ENCODE measurements at regions of chr12 and their contacts with region 1.

Region 1: DNA sequence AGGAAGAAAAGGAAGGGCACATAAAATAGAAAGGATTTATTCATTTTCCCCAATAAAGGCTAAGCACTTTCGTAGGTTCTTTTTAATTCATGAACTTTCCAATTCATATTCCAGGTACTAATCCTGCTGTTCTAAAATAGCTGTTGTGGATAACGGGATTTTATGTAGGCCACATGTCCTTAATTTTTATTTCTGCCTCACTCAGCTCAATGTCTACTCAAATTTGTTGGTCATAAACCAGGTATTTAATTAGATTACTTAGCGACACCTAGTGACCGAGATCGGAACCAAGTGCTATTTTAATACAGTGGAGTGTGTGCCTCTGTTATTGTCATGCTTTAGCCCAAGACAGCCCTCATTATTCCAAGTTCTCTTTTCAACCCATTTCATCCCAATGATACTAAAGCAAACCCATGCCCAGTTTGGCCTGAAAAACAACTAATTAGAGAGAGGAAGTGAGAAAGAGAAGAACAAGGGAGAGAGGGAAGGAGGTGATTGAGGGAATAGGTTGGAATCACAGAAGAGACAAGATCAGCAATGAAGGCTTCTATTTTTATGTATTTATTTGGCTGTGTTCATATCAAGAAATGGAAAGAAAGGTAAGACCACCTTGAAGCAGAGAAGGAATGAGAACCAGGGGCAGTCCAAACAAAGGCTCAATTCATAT is 45.9 kb upstream of the IFNG-AS1 start:
- DNase-seq: peak; percentile 81
- H3K4me3 ChIP-seq: no peak overlapping the region
- H3K27ac ChIP-seq: no peak overlapping the region
- H3K4me1 ChIP-seq: peaks cover 16% of the 10 kb centered on the region
- H3K27me3 ChIP-seq: no peaks in the 10 kb centered on the region

Region 2: DNA sequence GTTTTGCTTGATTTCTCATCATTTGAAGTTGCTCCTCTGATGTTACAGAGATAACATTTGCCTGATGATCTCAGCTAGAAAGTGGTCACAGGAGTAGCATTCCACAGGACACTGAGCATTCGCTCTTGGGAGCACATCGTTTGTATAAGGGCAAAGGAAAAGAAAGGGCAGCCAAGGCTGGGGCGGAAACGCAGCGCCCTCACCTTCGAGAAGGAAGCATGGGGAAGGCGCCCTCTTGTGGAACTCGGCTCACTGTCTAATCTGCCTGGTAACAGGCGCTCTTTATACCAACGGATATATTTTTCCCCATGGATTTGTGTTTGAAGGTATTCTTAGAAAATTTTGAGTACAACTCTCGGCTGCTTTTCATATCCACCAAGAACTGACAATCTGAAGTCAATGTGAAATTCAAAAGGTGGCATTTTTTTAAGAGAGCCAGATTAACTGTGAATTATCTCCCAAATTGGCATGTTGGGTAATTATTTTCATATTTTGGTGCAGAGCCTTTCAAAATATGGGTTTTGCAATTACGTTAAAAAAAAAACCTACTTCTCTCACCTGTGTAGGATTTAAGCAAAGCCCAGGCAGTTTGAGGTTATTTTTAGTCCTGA is 501.5 kb before region 1 on chr12:
- in situ Hi-C with region 1: loop called (anchors 10 kb)
- DNase-seq: peak; percentile 90
- H3K4me3 ChIP-seq: no peak overlapping the region
- H3K27ac ChIP-seq: no peak overlapping the region
- H3K4me1 ChIP-seq: peaks cover 7% of the 10 kb centered on the region
- H3K27me3 ChIP-seq: no peaks in the 10 kb centered on the region

Region 3: GRCh38 chr12:68175557-68176061 is 232.2 kb after region 1 on chr12:
- in situ Hi-C with region 1: no loop called
- DNase-seq: no peak
- H3K4me3 ChIP-seq: no peak overlapping the region
- H3K27ac ChIP-seq: no peak overlapping the region
- H3K4me1 ChIP-seq: no peaks in the 10 kb centered on the region
- H3K27me3 ChIP-seq: peaks cover 8% of the 10 kb centered on the region; the same call in 1 of the 2 replicates